Breast epithelium (tissue), 4 donors: ENCODE measurements at regions of chr10 and their contacts with region 1.

Region 1: GRCh38 chr10:117174439-117175214 is 22.7 kb upstream of the KCNK18 start:
- DNase-seq: peak; percentile 61 to 70
- H3K4me3 ChIP-seq: peak overlapping the region; percentile 24 to 63 (median 46)
- H3K27ac ChIP-seq: no peak overlapping the region
- H3K4me1 ChIP-seq: no peaks in the 10 kb centered on the region
- H3K27me3 ChIP-seq: peaks cover 0 to 48% of the 10 kb centered on the region in 2 donors
- CTCF ChIP-seq: peak; percentile 43 to 79 (median 74)
- POLR2A ChIP-seq: no peak

Region 2: GRCh38 chr10:116690356-116691322 is 484.0 kb before region 1 on chr10:
- intact Hi-C with region 1: loop called (anchors 10 kb)
- DNase-seq: no peak
- H3K4me3 ChIP-seq: no peak overlapping the region
- H3K27ac ChIP-seq: no peak overlapping the region
- H3K4me1 ChIP-seq: peaks cover 0 to 7% of the 10 kb centered on the region in 2 donors
- H3K27me3 ChIP-seq: no peaks in the 10 kb centered on the region
- CTCF ChIP-seq: no peak
- POLR2A ChIP-seq: no peak

Region 3: GRCh38 chr10:117136391-117136975 is 38.1 kb before region 1 on chr10:
- intact Hi-C with region 1: loop called (anchors 1 kb)
- DNase-seq: no peak
- H3K4me3 ChIP-seq: peak overlapping the region; percentile 37 to 65 (median 37)
- H3K27ac ChIP-seq: no peak overlapping the region
- H3K4me1 ChIP-seq: peaks cover 5 to 15% of the 10 kb centered on the region in 2 donors
- H3K27me3 ChIP-seq: peaks cover 12 to 97% of the 10 kb centered on the region in 2 donors
- CTCF ChIP-seq: no peak
- POLR2A ChIP-seq: no peak